ENCODE measurements at regions of chr15 and their contacts with region 1.

Region 1: DNA sequence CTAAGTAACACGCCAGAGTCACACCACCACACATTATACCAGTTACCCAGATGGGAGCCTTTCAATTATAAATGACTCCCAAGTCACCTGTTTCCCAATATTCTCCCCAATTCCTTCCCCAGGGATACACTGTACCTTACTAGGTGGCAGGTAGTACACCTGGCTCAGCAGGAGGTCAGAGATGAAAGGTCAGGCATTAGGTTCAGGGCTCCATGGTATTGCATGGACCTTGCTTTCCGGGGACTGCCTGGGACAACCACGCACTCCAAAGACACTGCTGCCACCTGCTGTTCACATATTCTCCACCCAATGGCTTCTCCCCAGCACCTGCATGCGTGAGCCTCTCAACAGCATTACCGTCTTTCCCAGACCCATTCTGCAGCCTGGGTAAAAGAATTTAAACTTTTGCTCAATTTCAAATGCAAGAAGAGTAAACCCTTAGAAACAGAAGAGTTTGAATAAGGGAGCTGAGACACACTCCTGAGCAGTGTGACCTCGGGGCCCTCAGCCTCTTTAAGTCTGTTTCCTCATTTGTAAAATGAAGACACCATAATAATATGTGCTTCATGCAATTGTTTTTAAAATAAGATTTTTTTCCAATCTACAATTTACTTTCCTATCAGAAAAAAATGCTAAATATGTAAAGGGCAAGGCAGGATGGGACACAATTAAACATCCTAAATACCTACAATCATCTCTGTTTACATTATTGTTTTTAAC is 28.0 kb upstream of the LACTB start:
- DNase-seq: peak; percentile 74
- H3K4me3 ChIP-seq: no peak overlapping the region
- H3K27ac ChIP-seq: no peak overlapping the region
- H3K4me1 ChIP-seq: peaks cover 5% of the 10 kb centered on the region
- CTCF ChIP-seq: peak; percentile 92

Region 2: GRCh38 chr15:62782039-62782791 is 311.4 kb before region 1 on chr15:
- CTCF ChIA-PET with region 1: no interaction called
- POLR2A ChIA-PET with region 1: no interaction called
- intact Hi-C with region 1: loop called (anchors 2 kb)
- DNase-seq: peak; percentile 10
- H3K4me3 ChIP-seq: no peak overlapping the region
- H3K27ac ChIP-seq: no peak overlapping the region
- H3K4me1 ChIP-seq: no peaks in the 10 kb centered on the region
- CTCF ChIP-seq: peak; percentile 55

Region 3: DNA sequence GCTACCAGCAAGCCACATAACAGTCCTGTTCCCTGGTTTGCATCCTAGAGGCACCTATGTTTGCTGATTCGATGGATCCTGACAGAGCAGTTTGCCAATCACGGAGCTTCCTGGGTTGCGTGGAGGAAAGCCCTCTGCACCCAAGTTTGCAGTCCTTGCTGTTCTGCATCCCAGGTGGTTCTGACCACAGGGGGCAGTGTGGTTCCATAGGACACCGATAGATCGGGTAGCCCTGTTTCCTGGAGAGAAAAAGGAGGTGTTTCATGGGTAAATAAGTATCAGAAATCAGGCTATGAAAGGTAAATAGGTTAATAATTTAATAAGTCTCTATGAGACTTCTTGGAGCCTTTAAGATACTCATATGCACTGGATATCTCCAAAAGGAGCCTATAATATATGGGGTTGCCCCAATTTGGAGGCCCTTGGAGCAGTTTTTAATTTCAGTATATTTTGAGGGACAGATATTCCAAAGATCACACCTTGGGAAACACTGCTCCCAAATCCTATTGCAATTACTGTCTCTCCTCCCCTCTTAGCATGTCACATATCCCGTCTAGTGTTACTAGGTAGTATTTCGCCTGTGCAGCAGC is 245.7 kb before region 1 on chr15:
- CTCF ChIA-PET with region 1: no interaction called
- POLR2A ChIA-PET with region 1: no interaction called
- intact Hi-C with region 1: loop called (anchors 5 kb)
- DNase-seq: peak; percentile 24
- H3K4me3 ChIP-seq: no peak overlapping the region
- H3K27ac ChIP-seq: no peak overlapping the region
- H3K4me1 ChIP-seq: no peaks in the 10 kb centered on the region
- CTCF ChIP-seq: peak; percentile 73

Region 4: GRCh38 chr15:62904041-62904910 is 189.4 kb before region 1 on chr15:
- CTCF ChIA-PET with region 1: no interaction called
- POLR2A ChIA-PET with region 1: no interaction called
- intact Hi-C with region 1: loop called (anchors 2 kb)
- DNase-seq: peak; percentile 38
- H3K4me3 ChIP-seq: no peak overlapping the region
- H3K27ac ChIP-seq: no peak overlapping the region
- H3K4me1 ChIP-seq: no peaks in the 10 kb centered on the region
- CTCF ChIP-seq: peak; percentile 74

Region 5: GRCh38 chr15:63048115-63048775 is 45.4 kb before region 1 on chr15:
- CTCF ChIA-PET with region 1: interaction called, 3 read pairs
- POLR2A ChIA-PET with region 1: interaction called, 3 read pairs
- intact Hi-C with region 1: loop called (anchors 2 kb)
- DNase-seq: peak; percentile 88
- H3K4me3 ChIP-seq: peak overlapping the region; percentile 89
- H3K27ac ChIP-seq: no peak overlapping the region
- H3K4me1 ChIP-seq: peaks cover 20% of the 10 kb centered on the region
- CTCF ChIP-seq: peak; percentile 94